Right ventricle myocardium superior (tissue), 1 donor: ENCODE measurements at regions of chr9 and their contacts with region 1.

Region 1: GRCh38 chr9:20941174-20941690 is 90.2 kb downstream of the HACD4 start:
- DNase-seq: peak; percentile 57
- ATAC-seq: peak; percentile 92

Region 2: GRCh38 chr9:20356403-20357035 is 584.7 kb before region 1 on chr9:
- intact Hi-C with region 1: loop called (anchors 2 kb)
- DNase-seq: peak; percentile 66
- ATAC-seq: peak; percentile 89

Region 3: GRCh38 chr9:20384642-20385041 is 556.6 kb before region 1 on chr9:
- intact Hi-C with region 1: no loop called
- DNase-seq: no peak
- ATAC-seq: no peak

Region 4: GRCh38 chr9:20754556-20754955 is 186.7 kb before region 1 on chr9:
- intact Hi-C with region 1: no loop called
- DNase-seq: no peak
- ATAC-seq: no peak

Region 5: DNA sequence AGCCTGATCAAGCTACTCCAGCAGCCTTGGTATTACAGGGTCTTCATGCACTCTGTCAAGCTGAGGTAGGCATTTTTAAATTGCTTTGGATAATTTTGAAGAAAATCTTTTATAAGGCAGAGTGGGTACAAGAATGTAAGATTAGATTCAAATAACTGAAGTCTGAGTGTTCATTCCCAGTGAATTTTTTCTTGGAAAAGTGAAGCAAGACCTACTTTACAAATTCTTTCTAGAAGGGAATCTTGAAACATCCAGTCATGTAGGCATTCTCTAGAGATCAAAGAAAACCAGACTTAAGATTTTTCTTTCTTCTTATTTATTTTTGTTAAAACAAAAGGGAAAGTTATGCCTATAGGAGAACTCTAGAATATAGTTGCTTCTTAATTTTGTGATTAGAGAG is 118.2 kb before region 1 on chr9:
- intact Hi-C with region 1: no loop called
- DNase-seq: no peak
- ATAC-seq: no peak

Region 6: DNA sequence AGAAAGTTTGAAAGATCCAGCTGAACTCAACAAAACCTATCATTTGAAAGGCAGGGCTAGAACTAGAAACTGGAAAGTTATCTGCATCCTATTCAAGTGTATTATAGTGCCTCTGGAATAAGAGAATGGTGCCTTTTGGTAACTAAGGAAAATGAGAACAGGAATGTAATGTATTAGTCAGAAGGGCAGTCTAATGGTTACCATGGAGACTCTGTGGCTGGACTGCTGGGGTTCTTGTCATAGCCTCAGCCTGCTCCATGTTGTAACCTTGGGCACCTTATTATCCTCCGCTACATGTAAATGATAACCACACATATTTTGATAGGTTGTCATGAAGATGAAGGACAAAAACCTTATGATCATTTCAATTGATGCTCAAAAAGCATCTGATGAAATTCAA is 161.1 kb after region 1 on chr9:
- intact Hi-C with region 1: loop called (anchors 10 kb)
- DNase-seq: no peak
- ATAC-seq: no peak